ENCODE measurements at regions of chr17 and their contacts with region 1.

Region 1: DNA sequence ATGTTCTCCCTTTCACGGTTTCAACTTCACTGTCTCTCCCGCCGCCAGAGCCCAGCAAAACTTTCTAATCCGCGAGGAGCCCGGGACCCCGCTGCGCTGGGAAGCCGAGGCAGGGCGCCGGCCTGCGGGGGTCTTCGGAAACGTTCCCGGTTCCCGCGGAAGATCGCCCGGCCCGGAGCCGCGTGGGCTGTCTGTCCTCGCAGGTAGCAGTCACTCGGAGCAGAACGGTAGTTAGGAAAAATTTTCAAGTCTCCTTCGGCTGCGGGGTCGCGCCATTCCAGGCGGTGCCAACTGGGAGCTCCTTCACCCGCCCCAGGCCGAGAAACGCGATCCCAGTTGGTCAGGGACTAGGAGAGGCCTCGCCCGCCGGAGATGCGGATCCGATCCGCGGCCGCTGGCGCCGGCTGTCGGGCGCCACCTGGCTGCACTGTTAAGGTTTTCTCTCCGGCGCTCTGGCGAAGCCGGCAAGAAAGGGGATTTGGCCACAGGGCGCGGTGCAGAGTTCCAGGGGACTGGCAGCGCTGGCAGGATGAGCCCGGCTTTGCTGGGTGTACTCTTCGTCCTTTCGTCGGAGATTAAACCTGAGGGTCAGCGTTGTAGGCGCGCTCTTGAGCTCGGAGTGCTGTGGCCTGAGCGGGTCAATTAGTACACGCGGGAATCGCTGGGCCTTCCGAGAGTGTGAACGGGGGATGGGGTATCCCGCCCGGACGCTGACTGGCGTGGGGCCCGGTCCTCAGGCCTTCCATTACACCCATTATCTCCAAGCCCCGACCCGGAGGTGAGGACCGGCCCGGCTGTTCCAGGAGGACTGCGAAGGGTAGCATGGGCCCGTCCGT is 135.4 kb downstream of the KCNJ12 start:
- DNase-seq: peak; percentile 90
- ATAC-seq: peak; percentile 91
- H3K4me3 Mint-ChIP-seq: peak overlapping the region; percentile 76
- H3K27ac Mint-ChIP-seq: no peak overlapping the region
- H3K4me1 Mint-ChIP-seq: peaks cover 28% of the 10 kb centered on the region
- H3K27me3 Mint-ChIP-seq: peaks cover 30% of the 10 kb centered on the region
- CTCF ChIP-seq: peak; percentile 44; the same call in 1 of the 2 replicates

Region 2: GRCh38 chr17:21463779-21464407 is 47.7 kb before region 1 on chr17:
- CTCF ChIA-PET with region 1: interaction called, 189 read pairs
- POLR2A ChIA-PET with region 1: no interaction called
- DNase-seq: peak; percentile 66
- ATAC-seq: peak; percentile 66
- H3K4me3 Mint-ChIP-seq: peak overlapping the region; percentile 64
- H3K27ac Mint-ChIP-seq: no peak overlapping the region
- H3K4me1 Mint-ChIP-seq: peaks cover 20% of the 10 kb centered on the region
- H3K27me3 Mint-ChIP-seq: peaks cover 60% of the 10 kb centered on the region
- CTCF ChIP-seq: no peak

Region 3: GRCh38 chr17:21495281-21495680 is 16.3 kb before region 1 on chr17:
- CTCF ChIA-PET with region 1: interaction called, 28 read pairs
- POLR2A ChIA-PET with region 1: no interaction called
- DNase-seq: no peak
- ATAC-seq: no peak
- H3K4me3 Mint-ChIP-seq: no peak overlapping the region
- H3K27ac Mint-ChIP-seq: no peak overlapping the region
- H3K4me1 Mint-ChIP-seq: peaks cover 34% of the 10 kb centered on the region
- H3K27me3 Mint-ChIP-seq: peaks cover 6% of the 10 kb centered on the region
- CTCF ChIP-seq: no peak

Region 4: GRCh38 chr17:21573961-21574610 is 62.5 kb after region 1 on chr17:
- CTCF ChIA-PET with region 1: no interaction called
- POLR2A ChIA-PET with region 1: no interaction called
- DNase-seq: no peak
- ATAC-seq: no peak
- H3K4me3 Mint-ChIP-seq: no peak overlapping the region
- H3K27ac Mint-ChIP-seq: no peak overlapping the region
- H3K4me1 Mint-ChIP-seq: no peaks in the 10 kb centered on the region
- H3K27me3 Mint-ChIP-seq: peaks cover 5% of the 10 kb centered on the region; the same call in 1 of the 2 replicates
- CTCF ChIP-seq: no peak

Measured in WTC11 (cell line).